Panc1 (cell line): ENCODE measurements at regions of chr20 and their contacts with region 1.

Region 1: DNA sequence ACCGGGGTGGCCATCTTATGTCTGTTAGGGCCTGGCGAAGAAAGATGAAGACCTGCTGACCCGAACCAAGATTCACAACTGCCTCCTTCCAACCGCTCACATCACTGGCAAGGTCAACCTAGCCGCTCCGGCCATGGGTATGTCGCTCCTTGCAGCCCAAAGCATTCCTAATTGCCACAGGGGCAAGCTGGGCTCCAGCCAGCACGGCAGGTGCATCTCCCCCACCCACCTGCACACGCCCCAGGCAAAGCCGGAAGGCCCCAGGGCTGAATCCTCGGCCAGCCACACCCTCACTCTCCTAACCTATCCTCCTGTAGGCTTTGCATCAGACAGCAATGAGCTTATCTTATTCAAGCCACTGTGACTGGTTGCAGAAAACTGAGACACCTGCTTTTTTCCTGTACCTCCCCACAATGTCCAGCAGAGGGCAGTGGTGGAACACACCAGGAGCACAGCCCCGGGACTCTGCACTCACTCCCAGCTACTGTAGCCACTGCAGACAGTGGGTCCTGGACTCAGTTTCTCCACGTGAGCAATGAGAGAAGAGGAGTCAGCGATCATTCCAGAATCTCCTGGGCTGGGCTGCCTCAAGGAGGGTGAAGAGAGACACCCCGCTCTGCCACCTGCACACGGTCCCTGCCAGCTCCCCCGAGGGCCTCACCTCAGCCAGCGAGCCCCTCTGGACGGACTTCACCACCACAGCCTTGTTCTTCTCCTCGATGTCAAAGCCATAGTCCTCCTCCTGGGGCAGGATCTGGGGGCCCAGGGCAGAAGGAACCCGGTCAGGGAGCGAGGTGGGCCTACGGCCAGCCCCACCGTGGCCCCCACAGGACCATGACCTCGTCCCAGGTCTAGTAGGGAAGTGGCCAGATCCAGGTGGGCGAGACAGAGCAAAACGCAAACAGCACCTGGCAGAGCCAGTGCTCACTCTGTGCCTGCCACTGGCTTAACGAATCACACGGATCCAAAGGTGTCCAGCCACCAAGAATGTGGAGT is 170.0 kb downstream of the PREX1 start:
- DNase-seq: peak; percentile 70
- ATAC-seq: peak; percentile 84
- H3K4me3 ChIP-seq: no peak overlapping the region
- H3K27ac ChIP-seq: no peak overlapping the region
- H3K4me1 ChIP-seq: no peaks in the 10 kb centered on the region
- H3K27me3 ChIP-seq: no peaks in the 10 kb centered on the region
- CTCF ChIP-seq: peak; percentile 93

Region 2: DNA sequence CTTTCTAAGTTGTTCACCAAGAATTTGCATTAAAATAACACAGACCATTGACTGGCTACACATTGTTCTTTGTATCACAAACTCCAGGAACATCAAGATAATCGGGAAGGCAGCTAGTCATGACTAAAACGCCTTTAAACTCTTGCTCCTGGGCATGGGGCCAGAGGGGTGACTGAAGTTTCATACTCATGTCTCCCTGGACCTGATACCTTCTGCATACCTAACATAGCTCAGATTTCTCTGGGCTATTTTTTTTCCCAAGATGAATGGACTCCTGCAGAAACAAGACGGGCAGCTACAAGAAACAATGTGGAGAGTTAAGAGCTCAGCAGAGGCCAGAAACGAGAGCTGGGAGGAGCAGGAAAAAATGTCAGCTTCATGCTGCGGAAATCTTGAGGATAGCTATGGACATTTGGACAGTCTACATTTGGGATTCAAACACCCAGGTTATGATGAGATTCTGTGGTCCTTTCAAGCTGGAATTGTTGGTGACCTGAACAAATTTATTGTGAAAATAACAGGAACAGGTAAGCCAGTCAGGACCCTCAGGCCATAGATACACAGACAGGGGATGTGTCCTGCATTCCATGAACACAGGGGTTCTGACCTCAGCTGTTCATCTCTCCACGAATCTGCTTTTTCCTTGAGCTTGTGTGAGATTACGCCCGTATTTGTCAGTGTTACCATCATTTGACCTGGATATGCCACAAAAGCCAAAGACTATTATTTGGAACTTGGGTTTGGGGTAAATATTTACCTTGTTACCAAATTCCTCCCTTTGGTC is 119.2 kb before region 1 on chr20:
- CTCF ChIA-PET with region 1: no interaction called
- POLR2A ChIA-PET with region 1: no interaction called
- in situ Hi-C with region 1: no loop called
- intact Hi-C with region 1: no loop called
- DNase-seq: no peak
- ATAC-seq: peak; percentile 38; the same call in 1 of the 2 replicates
- H3K4me3 ChIP-seq: no peak overlapping the region
- H3K27ac ChIP-seq: no peak overlapping the region
- H3K4me1 ChIP-seq: no peaks in the 10 kb centered on the region
- H3K27me3 ChIP-seq: peaks cover 5% of the 10 kb centered on the region; the same call in 1 of the 2 replicates
- CTCF ChIP-seq: no peak

Region 3: GRCh38 chr20:48828022-48828743 is 170.4 kb after region 1 on chr20:
- CTCF ChIA-PET with region 1: interaction called, 5 read pairs
- POLR2A ChIA-PET with region 1: no interaction called
- in situ Hi-C with region 1: no loop called
- intact Hi-C with region 1: loop called (anchors 5 kb)
- DNase-seq: no peak
- ATAC-seq: peak; percentile 78
- H3K4me3 ChIP-seq: peak overlapping the region; percentile 52 to 59
- H3K27ac ChIP-seq: peak overlapping the region; percentile 81
- H3K4me1 ChIP-seq: peaks cover 58% of the 10 kb centered on the region
- H3K27me3 ChIP-seq: no peaks in the 10 kb centered on the region
- CTCF ChIP-seq: no peak; the same call in 1 of the 2 replicates

Region 4: GRCh38 chr20:48891155-48891912 is 233.6 kb after region 1 on chr20:
- CTCF ChIA-PET with region 1: no interaction called
- POLR2A ChIA-PET with region 1: no interaction called
- in situ Hi-C with region 1: no loop called
- intact Hi-C with region 1: no loop called
- DNase-seq: no peak
- ATAC-seq: 0 out of 2 replicates have a peak, but pooled peaks have one; percentile 35
- H3K4me3 ChIP-seq: no peak overlapping the region
- H3K27ac ChIP-seq: no peak overlapping the region
- H3K4me1 ChIP-seq: no peaks in the 10 kb centered on the region
- H3K27me3 ChIP-seq: no peaks in the 10 kb centered on the region
- CTCF ChIP-seq: no peak